ENCODE measurements at regions of chr12 and their contacts with region 1.

Region 1: GRCh38 chr12:31406345-31406744 is 80.4 kb upstream of the SINHCAF start:
- DNase-seq: peak; percentile 55
- ATAC-seq: peak; percentile 26
- H3K4me3 ChIP-seq: no peak overlapping the region
- H3K4me3 Mint-ChIP-seq: peak overlapping the region; percentile 40
- H3K27ac ChIP-seq: peak overlapping the region; percentile 50 to 51
- H3K27ac Mint-ChIP-seq: peak overlapping the region; percentile 28
- H3K4me1 ChIP-seq: peaks cover 23 to 44% of the 10 kb centered on the region in 2 donors
- H3K4me1 Mint-ChIP-seq: peaks cover 24% of the 10 kb centered on the region
- H3K27me3 ChIP-seq: no peaks in the 10 kb centered on the region
- H3K27me3 Mint-ChIP-seq: no peaks in the 10 kb centered on the region
- CTCF ChIP-seq: no peak

Region 2: GRCh38 chr12:31325877-31326631 is 80.3 kb before region 1 on chr12 and contains the start of gene SINHCAF:
- CTCF ChIA-PET with region 1: interaction called, 8 read pairs
- POLR2A ChIA-PET with region 1: no interaction called
- intact Hi-C with region 1: loop called (anchors 5 kb)
- DNase-seq: peak; percentile 99
- ATAC-seq: peak; percentile 64
- H3K4me3 ChIP-seq: peak within 1 kb of the TSS; percentile 70 to 96 (median 93)
- H3K4me3 Mint-ChIP-seq: peak within 1 kb of the TSS; percentile 98
- H3K27ac ChIP-seq: peak within 1 kb of the TSS; percentile 97
- H3K27ac Mint-ChIP-seq: peak within 1 kb of the TSS; percentile 99
- H3K4me1 ChIP-seq: peaks cover 27 to 36% of the 10 kb centered on the region in 2 donors
- H3K4me1 Mint-ChIP-seq: peaks cover 39% of the 10 kb centered on the region
- H3K27me3 ChIP-seq: no peaks in the 10 kb centered on the region
- H3K27me3 Mint-ChIP-seq: no peaks in the 10 kb centered on the region
- CTCF ChIP-seq: no peak
- total RNA-seq, gene SINHCAF: 127 and 129 TPM in 2 replicates

Region 3: DNA sequence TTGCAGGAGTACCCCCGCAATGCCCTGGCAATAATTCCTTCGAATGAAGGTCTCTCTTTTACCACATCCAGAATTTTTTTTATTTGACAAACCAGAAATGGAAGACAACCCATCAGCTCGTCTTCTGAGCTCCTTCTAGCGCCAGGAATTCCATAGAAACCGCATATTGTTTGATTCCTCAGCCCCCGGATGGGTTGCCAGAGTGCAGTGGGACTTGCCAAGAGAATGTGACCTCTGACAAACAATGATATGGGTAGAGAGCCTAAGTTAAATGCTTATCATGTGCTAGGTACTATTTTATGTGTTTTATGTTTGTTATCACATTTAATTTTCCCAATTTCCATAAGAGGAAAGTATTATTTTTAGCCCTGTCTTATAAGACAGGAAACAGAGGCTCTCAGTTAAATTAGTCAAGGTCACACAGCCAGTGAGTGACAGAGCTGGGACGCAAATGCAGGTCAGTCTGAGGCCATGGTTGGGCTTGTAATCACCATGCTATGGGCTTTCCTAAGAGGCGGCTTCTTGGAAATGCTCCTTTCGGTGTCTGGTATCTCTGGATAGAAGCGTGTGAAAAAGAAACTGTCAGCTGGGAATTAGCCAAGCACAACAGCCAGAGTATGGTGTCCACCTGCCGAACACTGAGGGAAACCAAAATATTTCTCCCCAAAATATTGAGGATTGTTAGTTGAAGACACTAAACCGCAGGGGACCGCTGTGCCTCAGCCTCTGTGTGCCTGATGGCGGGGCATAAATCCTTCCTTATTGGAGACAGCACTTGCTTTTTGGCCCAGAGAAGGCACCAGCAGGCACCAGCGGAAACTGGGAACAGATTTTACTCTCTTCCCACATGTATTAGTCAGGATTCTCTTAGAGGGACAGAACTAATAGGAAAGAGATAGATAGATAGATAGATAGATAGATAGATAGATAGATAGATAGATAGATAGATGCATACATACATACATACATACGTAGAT is 223.7 kb after region 1 on chr12:
- CTCF ChIA-PET with region 1: interaction called, 26 read pairs
- POLR2A ChIA-PET with region 1: interaction called, 8 read pairs
- intact Hi-C with region 1: no loop called
- DNase-seq: no peak
- ATAC-seq: no peak
- H3K4me3 ChIP-seq: no peak overlapping the region
- H3K4me3 Mint-ChIP-seq: no peak overlapping the region
- H3K27ac ChIP-seq: no peak overlapping the region
- H3K27ac Mint-ChIP-seq: no peak overlapping the region
- H3K4me1 ChIP-seq: peaks cover 13% of the 10 kb centered on the region in 2 donors
- H3K4me1 Mint-ChIP-seq: peaks cover 29% of the 10 kb centered on the region
- H3K27me3 ChIP-seq: no peaks in the 10 kb centered on the region
- H3K27me3 Mint-ChIP-seq: no peaks in the 10 kb centered on the region
- CTCF ChIP-seq: no peak

Region 4: DNA sequence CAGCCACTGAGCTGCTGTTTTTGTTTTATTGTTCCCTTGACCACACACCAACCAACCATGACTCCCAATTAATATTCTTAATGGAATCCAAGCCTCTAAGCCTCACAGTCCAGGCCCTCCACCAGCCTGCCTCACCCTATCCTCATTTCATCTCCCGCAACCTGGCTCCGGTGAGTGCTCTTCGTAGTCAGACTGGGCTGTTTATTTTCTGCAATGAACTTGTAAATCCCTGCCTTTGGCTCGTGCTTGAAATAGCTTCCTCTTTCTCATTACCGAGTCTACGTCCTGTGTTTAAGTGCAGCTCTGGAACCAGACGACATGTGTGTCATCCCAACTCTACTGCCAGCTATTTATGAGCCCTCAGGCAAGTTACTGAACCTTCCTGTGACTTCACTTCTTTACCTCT is 240.7 kb after region 1 on chr12:
- CTCF ChIA-PET with region 1: interaction called, 58 read pairs
- POLR2A ChIA-PET with region 1: no interaction called
- intact Hi-C with region 1: no loop called
- DNase-seq: peak; percentile 44
- ATAC-seq: peak; percentile 28
- H3K4me3 ChIP-seq: no peak overlapping the region
- H3K4me3 Mint-ChIP-seq: peak overlapping the region; percentile 24
- H3K27ac ChIP-seq: no peak overlapping the region
- H3K27ac Mint-ChIP-seq: peak overlapping the region; percentile 38
- H3K4me1 ChIP-seq: peaks cover 21 to 22% of the 10 kb centered on the region in 2 donors
- H3K4me1 Mint-ChIP-seq: peaks cover 29% of the 10 kb centered on the region
- H3K27me3 ChIP-seq: no peaks in the 10 kb centered on the region
- H3K27me3 Mint-ChIP-seq: no peaks in the 10 kb centered on the region
- CTCF ChIP-seq: no peak

Region 5: DNA sequence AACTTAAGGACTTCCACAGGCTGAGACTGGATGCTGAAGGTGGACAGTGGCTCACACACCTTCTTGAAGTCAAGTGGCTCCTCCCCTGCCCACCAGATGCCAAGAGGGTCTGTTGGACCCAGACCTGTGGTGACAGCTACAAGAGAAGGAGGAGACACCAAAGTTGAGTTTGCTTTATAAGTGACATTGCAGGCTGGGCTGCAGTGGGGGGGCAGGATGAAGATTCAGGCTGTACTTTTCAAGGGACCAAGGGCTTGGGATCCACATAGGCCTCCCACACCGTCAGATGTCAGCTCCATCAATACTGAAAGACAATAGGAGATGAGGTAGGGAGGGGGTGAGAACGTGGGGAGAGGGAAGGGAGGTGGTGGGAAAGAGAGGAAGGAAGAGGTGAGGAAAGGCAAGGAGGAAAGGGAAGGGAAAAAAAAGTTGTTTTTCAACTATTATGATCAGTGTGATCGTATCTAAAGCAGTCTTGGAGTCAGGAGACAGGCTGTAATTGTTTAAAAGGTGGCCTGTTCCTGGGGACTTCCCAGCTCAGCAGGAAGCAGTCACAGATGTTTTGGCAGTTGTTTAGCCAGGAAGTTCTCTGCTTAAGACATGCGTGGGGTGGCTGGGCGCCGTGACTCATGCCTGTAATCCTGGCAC is 468.7 kb after region 1 on chr12:
- CTCF ChIA-PET with region 1: no interaction called
- POLR2A ChIA-PET with region 1: no interaction called
- intact Hi-C with region 1: loop called (anchors 5 kb)
- DNase-seq: peak; percentile 88
- ATAC-seq: peak; percentile 83
- H3K4me3 ChIP-seq: peak overlapping the region in 4 of 5 experiments; percentile 3 to 42 (median 30)
- H3K4me3 Mint-ChIP-seq: peak overlapping the region; percentile 85
- H3K27ac ChIP-seq: peak overlapping the region; percentile 98 to 100
- H3K27ac Mint-ChIP-seq: peak overlapping the region; percentile 100
- H3K4me1 ChIP-seq: peaks cover 63 to 72% of the 10 kb centered on the region in 2 donors
- H3K4me1 Mint-ChIP-seq: peaks cover 75% of the 10 kb centered on the region
- H3K27me3 ChIP-seq: no peaks in the 10 kb centered on the region
- H3K27me3 Mint-ChIP-seq: no peaks in the 10 kb centered on the region
- CTCF ChIP-seq: no peak

Region 6: DNA sequence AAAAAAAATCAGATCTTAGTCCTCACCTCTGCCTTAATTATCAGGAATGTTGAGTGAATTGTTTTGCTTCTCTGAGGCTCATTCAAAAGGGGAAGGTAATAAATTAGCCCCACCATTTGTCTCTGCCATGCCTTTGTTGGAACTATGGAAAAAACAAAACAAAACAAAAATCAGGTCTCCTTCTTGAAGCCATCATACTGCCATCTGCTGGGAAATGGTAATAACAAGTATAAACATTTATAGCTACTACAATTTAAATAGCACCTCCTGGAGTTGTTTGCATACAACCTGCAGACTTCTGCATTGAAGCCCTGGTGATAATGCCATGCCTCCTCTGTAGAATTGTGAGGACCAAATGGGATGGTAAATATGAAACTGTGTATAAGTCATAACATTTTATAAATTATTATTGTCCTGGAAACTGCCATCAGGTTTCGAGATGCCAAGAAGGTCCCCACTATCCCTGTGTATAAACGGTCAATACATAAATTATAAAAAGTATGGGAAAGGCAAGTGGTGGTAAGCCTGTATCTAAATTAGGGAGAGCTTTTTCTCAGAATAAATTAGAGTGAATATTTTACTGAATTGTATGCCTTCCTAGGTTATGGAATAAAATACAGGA is 905.8 kb after region 1 on chr12:
- CTCF ChIA-PET with region 1: interaction called, 22 read pairs
- POLR2A ChIA-PET with region 1: no interaction called
- intact Hi-C with region 1: loop called (anchors 2 kb)
- DNase-seq: peak; percentile 67
- ATAC-seq: peak; percentile 58
- H3K4me3 ChIP-seq: no peak overlapping the region
- H3K4me3 Mint-ChIP-seq: no peak overlapping the region
- H3K27ac ChIP-seq: no peak overlapping the region
- H3K27ac Mint-ChIP-seq: peak overlapping the region; percentile 86
- H3K4me1 ChIP-seq: peaks cover 0 to 6% of the 10 kb centered on the region in 2 donors
- H3K4me1 Mint-ChIP-seq: peaks cover 8% of the 10 kb centered on the region
- H3K27me3 ChIP-seq: no peaks in the 10 kb centered on the region
- H3K27me3 Mint-ChIP-seq: no peaks in the 10 kb centered on the region
- CTCF ChIP-seq: peak; percentile 76